Endothelial cell of umbilical vein (primary cell): ENCODE measurements at regions of chr17 and their contacts with region 1.

Region 1: GRCh38 chr17:8383143-8383822 is at the start of gene RPL26:
- DNase-seq: peak; percentile 98
- H3K4me3 ChIP-seq: peak within 1 kb of the TSS; percentile 76 to 100 (median 99)
- H3K27ac ChIP-seq: peak within 1 kb of the TSS; percentile 78
- H3K4me1 ChIP-seq: peaks cover 39% of the 10 kb centered on the region
- H3K27me3 ChIP-seq: no peaks in the 10 kb centered on the region
- CTCF ChIP-seq: peak; percentile 69 to 95
- POLR2A ChIP-seq: peak; percentile 97
- total RNA-seq, gene RPL26: 1,739 and 1,805 TPM in 2 replicates

Region 2: GRCh38 chr17:8248751-8249607 is 134.3 kb before region 1 on chr17 and contains the start of gene PFAS:
- CTCF ChIA-PET with region 1: no interaction called
- POLR2A ChIA-PET with region 1: no interaction called
- dilution Hi-C with region 1: no loop called
- intact Hi-C with region 1: loop called (anchors 1 kb)
- DNase-seq: peak; percentile 90
- H3K4me3 ChIP-seq: peak within 1 kb of the TSS; percentile 69 to 98 (median 80)
- H3K27ac ChIP-seq: peak within 1 kb of the TSS; percentile 73
- H3K4me1 ChIP-seq: peaks cover 14% of the 10 kb centered on the region
- H3K27me3 ChIP-seq: no peaks in the 10 kb centered on the region
- CTCF ChIP-seq: peak in 1 of 2 donors; percentile 6
- POLR2A ChIP-seq: peak; percentile 79
- total RNA-seq, gene PFAS: 84.1 and 108 TPM in 2 replicates

Region 3: GRCh38 chr17:8326511-8327302 is 56.6 kb before region 1 on chr17:
- CTCF ChIA-PET with region 1: interaction called, 18 read pairs
- POLR2A ChIA-PET with region 1: interaction called, 17 read pairs
- dilution Hi-C with region 1: no loop called
- intact Hi-C with region 1: loop called (anchors 1 kb)
- DNase-seq: peak; percentile 56
- H3K4me3 ChIP-seq: peak overlapping the region; percentile 60 to 74 (median 71)
- H3K27ac ChIP-seq: peak overlapping the region; percentile 86
- H3K4me1 ChIP-seq: peaks cover 20% of the 10 kb centered on the region
- H3K27me3 ChIP-seq: no peaks in the 10 kb centered on the region
- CTCF ChIP-seq: peak in 1 of 2 donors; percentile 1
- POLR2A ChIP-seq: peak; percentile 59

Region 4: DNA sequence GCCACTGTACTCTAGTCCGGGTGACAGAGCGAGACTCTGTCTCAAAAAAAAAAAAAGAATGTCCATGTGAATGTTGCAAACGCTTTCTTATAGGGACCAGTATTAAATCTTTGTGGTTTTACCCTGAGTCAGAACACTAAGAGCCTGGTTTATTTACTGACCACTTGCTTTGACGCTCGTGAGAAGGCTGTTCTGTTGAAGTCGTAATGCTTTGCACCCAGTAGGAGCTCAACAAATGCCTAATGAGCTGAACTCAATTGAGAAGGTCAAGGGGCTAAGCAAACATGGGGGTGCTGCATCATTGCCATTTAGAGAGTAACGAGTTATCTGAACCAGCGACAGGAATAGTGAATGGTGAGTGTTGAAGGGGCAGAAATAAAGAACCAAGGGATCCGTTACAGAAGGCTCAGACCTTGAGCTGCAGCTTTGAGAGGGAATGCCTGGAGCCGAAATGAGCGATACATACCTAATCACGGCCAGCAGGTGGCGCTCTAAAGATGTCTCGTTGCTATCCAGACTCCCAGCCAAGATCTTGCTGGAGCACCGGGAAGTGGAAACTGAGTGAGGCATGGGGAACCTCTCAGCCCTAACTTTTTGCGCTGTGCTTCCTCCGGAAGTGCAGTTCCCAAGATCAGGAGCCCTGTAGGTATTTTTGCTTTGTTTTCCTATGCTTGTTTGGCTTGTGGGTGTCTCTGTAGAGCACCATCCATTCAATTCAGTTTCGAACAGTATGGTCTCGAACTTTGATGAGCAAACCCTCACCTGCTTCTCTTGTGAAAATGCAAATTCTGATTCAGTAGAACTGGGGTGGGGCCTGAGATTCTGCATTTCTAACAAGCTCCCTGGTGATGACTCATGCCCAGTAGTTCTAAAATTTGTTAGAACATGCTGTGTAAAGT is 26.9 kb after region 1 on chr17:
- CTCF ChIA-PET with region 1: interaction called, 11 read pairs
- POLR2A ChIA-PET with region 1: no interaction called
- dilution Hi-C with region 1: no loop called
- intact Hi-C with region 1: loop called (anchors 2 kb)
- DNase-seq: peak; percentile 84
- H3K4me3 ChIP-seq: no peak overlapping the region
- H3K27ac ChIP-seq: no peak overlapping the region
- H3K4me1 ChIP-seq: no peaks in the 10 kb centered on the region
- H3K27me3 ChIP-seq: peaks cover 4 to 9% of the 10 kb centered on the region in 2 experiments
- CTCF ChIP-seq: peak; percentile 81 to 86
- POLR2A ChIP-seq: no peak

Region 5: GRCh38 chr17:8503368-8503767 is 120.1 kb after region 1 on chr17:
- CTCF ChIA-PET with region 1: no interaction called
- POLR2A ChIA-PET with region 1: no interaction called
- dilution Hi-C with region 1: no loop called
- intact Hi-C with region 1: no loop called
- DNase-seq: peak; percentile 8
- H3K4me3 ChIP-seq: no peak overlapping the region
- H3K27ac ChIP-seq: no peak overlapping the region
- H3K4me1 ChIP-seq: no peaks in the 10 kb centered on the region
- H3K27me3 ChIP-seq: no peaks in the 10 kb centered on the region
- CTCF ChIP-seq: no peak
- POLR2A ChIP-seq: no peak

Region 6: DNA sequence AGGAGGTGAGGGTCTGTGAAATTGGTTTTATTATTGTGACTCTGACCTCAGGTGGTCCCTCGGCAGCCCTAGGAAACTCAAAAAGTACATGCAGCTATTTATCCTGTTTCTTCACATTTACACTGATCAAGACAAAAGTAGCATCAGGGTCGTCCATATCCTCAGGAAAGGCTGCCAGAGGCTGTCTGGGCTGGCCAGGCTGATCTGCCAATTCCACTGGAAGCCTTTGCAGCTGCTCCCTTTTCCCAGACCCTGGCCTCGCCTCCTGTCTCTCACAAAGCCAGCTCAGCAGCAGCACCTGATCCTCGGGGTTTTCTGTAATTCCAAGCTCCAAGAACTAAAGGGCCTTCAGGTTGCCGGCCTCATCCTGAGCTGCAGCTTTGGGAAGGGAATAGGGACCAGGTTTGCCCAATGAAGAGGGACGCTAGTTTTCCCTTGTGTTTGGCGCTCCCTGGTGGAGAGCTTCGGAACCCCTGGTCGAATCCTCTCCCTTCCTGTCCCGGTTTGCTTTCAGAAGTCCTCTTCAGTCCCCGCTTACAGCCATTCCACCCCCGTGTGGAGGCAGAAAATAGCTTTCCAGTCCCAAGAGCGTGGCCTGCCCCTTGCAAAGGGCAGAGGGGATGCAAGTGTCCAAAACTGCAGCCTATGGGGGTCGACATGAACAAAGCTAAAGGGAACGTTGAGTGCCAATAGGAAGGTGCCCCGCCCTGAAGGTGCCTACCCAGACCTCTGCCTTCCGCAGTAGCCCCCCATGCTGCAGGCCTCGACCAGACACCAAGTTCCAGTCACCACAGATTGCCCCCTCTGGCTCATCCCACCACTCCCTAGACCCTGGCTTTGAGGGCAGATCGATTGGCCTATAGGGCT is 402.5 kb after region 1 on chr17:
- CTCF ChIA-PET with region 1: interaction called, 18 read pairs
- POLR2A ChIA-PET with region 1: no interaction called
- dilution Hi-C with region 1: no loop called
- intact Hi-C with region 1: loop called (anchors 1 kb)
- DNase-seq: peak; percentile 70
- H3K4me3 ChIP-seq: no peak overlapping the region
- H3K27ac ChIP-seq: no peak overlapping the region
- H3K4me1 ChIP-seq: no peaks in the 10 kb centered on the region
- H3K27me3 ChIP-seq: no peaks in the 10 kb centered on the region
- CTCF ChIP-seq: peak; percentile 81 to 90
- POLR2A ChIP-seq: no peak